T-cell (primary cell): ENCODE measurements at regions of chr12 and their contacts with region 1.

Region 1: DNA sequence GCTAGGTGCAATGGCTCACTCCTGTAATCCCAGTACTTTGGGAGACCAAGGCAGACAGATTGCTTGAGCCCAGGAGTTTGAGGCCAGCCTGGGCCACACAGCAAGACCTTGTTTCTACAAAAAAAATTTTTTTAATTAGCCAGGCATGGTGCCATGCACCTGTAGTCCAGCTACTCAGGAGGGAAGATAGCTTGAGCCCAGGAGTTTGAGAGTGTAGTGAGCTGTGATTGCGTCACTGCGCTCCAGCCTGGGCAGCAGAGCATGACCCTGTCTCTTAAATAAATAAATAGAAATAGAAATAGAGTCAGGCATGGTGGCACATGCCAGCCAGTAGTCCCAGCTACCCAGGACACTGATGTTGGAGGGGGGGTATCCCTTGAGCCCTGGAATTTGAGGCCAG is 36.7 kb upstream of the CLIP1 start:
- DNase-seq: no peak
- ATAC-seq: no peak
- H3K4me3 ChIP-seq: no peak overlapping the region
- H3K4me3 Mint-ChIP-seq: no peak overlapping the region
- H3K27ac ChIP-seq: no peak overlapping the region
- H3K27ac Mint-ChIP-seq: no peak overlapping the region
- H3K4me1 ChIP-seq: peaks cover 2 to 11% of the 10 kb centered on the region in 2 experiments
- H3K4me1 Mint-ChIP-seq: peaks cover 2 to 16% (median 11%) of the 10 kb centered on the region in 3 donors
- H3K27me3 ChIP-seq: no peaks in the 10 kb centered on the region
- H3K27me3 Mint-ChIP-seq: no peaks in the 10 kb centered on the region

Region 2: DNA sequence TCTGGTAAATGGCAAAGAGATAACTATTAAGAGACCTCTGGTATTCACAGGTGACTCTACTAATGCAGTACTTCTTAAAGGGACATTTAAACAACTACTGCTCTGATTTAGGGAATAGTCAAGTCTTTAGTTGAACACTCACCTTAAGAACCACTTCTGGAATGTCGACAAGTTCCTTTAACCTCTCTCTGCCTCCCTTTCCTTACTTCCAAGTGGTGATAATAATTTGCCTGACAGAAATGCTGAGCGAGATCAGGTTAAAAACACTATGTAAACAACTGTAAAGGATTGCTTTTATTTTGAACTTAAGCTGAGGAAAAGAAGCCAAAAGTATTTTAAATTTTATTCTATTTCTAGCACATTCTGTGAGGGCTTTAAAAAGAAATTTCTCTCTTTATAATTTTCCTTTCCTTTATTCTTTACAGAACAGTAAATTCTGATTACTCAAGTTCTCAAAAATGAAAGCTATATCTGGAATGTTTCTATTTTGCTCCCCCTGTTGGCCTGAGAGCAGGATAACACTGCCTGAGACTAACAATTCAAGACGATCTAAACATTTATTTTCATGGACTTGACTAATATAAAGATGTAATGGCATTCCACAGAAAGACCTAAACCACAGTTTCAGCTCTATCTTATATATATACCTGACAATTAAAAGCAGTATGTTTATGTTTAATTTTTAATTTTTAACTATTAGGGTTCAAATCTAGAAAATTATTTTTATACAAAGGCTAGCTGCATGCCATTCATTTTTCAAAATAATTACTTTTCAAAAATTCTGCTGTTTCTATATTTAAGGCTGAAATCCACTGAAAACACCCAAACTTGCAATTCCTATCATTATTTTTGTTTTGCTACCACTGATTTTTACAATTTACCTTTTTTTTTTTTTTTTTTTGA is 12.4 kb after region 1 on chr12:
- CTCF ChIA-PET with region 1: interaction called, 11 to 14 read pairs
- POLR2A ChIA-PET with region 1: interaction called in 1 of 2 experiments, 3 read pairs
- DNase-seq: peak in 10 of 35 experiments; percentile 7 to 80 (median 20)
- ATAC-seq: peak; percentile 54 to 80 (median 72)
- H3K4me3 ChIP-seq: no peak overlapping the region
- H3K4me3 Mint-ChIP-seq: no peak overlapping the region
- H3K27ac ChIP-seq: peak overlapping the region; percentile 16
- H3K27ac Mint-ChIP-seq: peak overlapping the region; percentile 12 to 49
- H3K4me1 ChIP-seq: peaks cover 0 to 5% of the 10 kb centered on the region in 2 experiments
- H3K4me1 Mint-ChIP-seq: peaks cover 7 to 9% (median 8%) of the 10 kb centered on the region in 3 donors
- H3K27me3 ChIP-seq: no peaks in the 10 kb centered on the region
- H3K27me3 Mint-ChIP-seq: no peaks in the 10 kb centered on the region

Region 3: GRCh38 chr12:122517877-122518276 is 58.7 kb after region 1 on chr12:
- CTCF ChIA-PET with region 1: no interaction called
- POLR2A ChIA-PET with region 1: no interaction called
- DNase-seq: no peak
- ATAC-seq: no peak
- H3K4me3 ChIP-seq: no peak overlapping the region
- H3K4me3 Mint-ChIP-seq: no peak overlapping the region
- H3K27ac ChIP-seq: no peak overlapping the region
- H3K27ac Mint-ChIP-seq: no peak overlapping the region
- H3K4me1 ChIP-seq: peaks cover 4% of the 10 kb centered on the region in 2 experiments
- H3K4me1 Mint-ChIP-seq: peaks cover 30 to 49% (median 48%) of the 10 kb centered on the region in 3 donors
- H3K27me3 ChIP-seq: no peaks in the 10 kb centered on the region
- H3K27me3 Mint-ChIP-seq: no peaks in the 10 kb centered on the region